Heart right ventricle (tissue), 16 donors: ENCODE measurements at regions of chr10 and their contacts with region 1.

Region 1: GRCh38 chr10:44786286-44786850 is 124.8 kb upstream of the TMEM72 start:
- DNase-seq: no peak
- ATAC-seq: peak in 4 of 8 donors; percentile 27 to 60 (median 50)
- H3K4me3 ChIP-seq: no peak overlapping the region
- H3K27ac ChIP-seq: no peak overlapping the region
- H3K4me1 ChIP-seq: no peaks in the 10 kb centered on the region
- H3K27me3 ChIP-seq: peaks cover 0 to 4% (median 0%) of the 10 kb centered on the region in 7 donors
- CTCF ChIP-seq: no peak

Region 2: GRCh38 chr10:42898037-42898960 is 1888.1 kb before region 1 on chr10:
- intact Hi-C with region 1: loop called in 1 of 10 experiments (anchors 5 kb)
- DNase-seq: no peak
- ATAC-seq: peak in 1 of 8 donors; percentile 33
- H3K4me3 ChIP-seq: no peak overlapping the region
- H3K27ac ChIP-seq: no peak overlapping the region
- H3K4me1 ChIP-seq: no peaks in the 10 kb centered on the region
- H3K27me3 ChIP-seq: peaks cover 0 to 63% (median 57%) of the 10 kb centered on the region in 7 donors
- CTCF ChIP-seq: no peak

Region 3: GRCh38 chr10:44835300-44835699 is 48.9 kb after region 1 on chr10:
- intact Hi-C with region 1: loop called in 1 of 10 experiments (anchors 5 kb)
- DNase-seq: no peak
- ATAC-seq: no peak
- H3K4me3 ChIP-seq: no peak overlapping the region
- H3K27ac ChIP-seq: no peak overlapping the region
- H3K4me1 ChIP-seq: peaks cover 0 to 4% (median 0%) of the 10 kb centered on the region in 9 donors
- H3K27me3 ChIP-seq: peaks cover 0 to 3% (median 0%) of the 10 kb centered on the region in 7 donors
- CTCF ChIP-seq: no peak